ENCODE measurements at regions of chr13 and their contacts with region 1.

Region 1: GRCh38 chr13:107099661-107100060 is 531.7 kb upstream of the ARGLU1 start:
- DNase-seq: no peak
- H3K4me3 ChIP-seq: no peak overlapping the region
- H3K4me3 Mint-ChIP-seq: no peak overlapping the region
- H3K27ac Mint-ChIP-seq: no peak overlapping the region
- H3K4me1 ChIP-seq: no peaks in the 10 kb centered on the region
- H3K4me1 Mint-ChIP-seq: peaks cover 17% of the 10 kb centered on the region
- H3K27me3 ChIP-seq: no peaks in the 10 kb centered on the region
- H3K27me3 Mint-ChIP-seq: no peaks in the 10 kb centered on the region
- CTCF ChIP-seq: no peak

Region 2: DNA sequence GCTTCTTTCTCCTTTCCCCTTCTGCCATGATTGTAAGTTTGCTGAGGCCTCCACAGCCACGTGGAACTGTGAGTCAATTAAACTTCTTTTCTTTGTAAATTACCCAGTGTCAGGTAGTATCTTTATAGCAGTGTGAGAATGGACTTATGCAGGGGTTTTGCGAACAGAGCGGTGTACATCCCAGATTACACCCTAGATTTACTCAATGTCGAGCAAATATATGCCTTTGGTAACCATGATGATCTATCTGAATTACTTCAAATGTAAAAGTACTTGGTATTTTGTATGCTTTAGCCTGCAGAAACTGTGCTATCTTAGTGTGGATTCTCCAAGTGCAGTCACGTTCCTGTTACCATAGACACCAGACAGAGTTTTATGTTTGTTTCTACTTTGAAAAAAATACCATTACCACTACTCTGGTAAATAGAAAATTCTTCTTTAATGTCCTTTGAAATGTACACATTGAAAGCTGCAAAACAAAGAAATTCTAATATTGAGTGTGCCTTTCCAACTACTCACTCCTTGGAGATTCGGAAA is 21.4 kb before region 1 on chr13:
- CTCF ChIA-PET with region 1: no interaction called
- POLR2A ChIA-PET with region 1: no interaction called
- intact Hi-C with region 1: loop called (anchors 1 kb)
- DNase-seq: no peak
- H3K4me3 ChIP-seq: no peak overlapping the region
- H3K4me3 Mint-ChIP-seq: no peak overlapping the region
- H3K27ac Mint-ChIP-seq: no peak overlapping the region
- H3K4me1 ChIP-seq: no peaks in the 10 kb centered on the region
- H3K4me1 Mint-ChIP-seq: no peaks in the 10 kb centered on the region
- H3K27me3 ChIP-seq: no peaks in the 10 kb centered on the region
- H3K27me3 Mint-ChIP-seq: no peaks in the 10 kb centered on the region
- CTCF ChIP-seq: no peak

Measured in Caco-2 (cell line).